A673 (cell line): ENCODE measurements at regions of chr1 and their contacts with region 1.

Region 1: DNA sequence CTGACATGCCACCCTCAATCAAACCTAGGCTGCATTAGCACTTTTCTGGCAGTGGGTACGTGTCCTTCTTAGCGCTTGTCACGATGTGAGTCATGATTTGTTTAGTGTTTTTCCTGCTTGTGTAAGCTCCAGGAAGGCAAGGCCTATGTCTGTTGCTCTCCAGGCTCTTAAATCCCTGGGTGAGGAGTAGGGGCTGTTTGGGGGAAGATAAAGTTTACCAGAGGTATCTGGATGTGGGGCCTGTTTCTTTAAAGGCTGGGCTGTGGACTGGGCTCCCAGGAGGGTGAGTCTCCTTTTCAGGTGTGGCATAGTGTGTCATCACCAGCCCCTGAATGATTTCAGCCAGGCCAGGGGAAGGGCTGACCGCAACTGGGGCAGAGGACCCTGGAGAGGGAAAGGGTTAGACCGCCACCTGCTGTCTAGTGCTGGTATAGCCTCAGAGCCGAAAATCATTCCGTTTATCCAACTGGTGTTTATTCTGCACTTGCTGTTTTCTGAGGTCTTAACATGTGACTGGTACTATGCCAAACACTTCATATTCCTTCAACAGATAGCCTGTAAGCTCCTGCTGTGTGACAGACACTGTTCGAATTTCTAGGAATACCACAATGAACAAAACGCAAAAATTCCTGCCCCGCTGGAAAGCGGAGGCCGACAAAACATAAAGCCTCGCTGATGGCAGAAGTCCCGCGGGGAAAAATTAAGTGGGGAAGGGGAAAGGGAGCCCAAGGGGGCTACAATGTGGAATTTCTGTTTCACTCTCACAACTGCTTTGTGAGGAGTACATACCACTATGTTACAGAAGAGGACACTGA is 9.7 kb downstream of the SERINC2 start:
- DNase-seq: peak; percentile 59
- H3K4me3 ChIP-seq: no peak overlapping the region
- H3K27ac ChIP-seq: no peak overlapping the region
- H3K4me1 ChIP-seq: no peaks in the 10 kb centered on the region
- H3K27me3 ChIP-seq: no peaks in the 10 kb centered on the region
- CTCF ChIP-seq: peak; percentile 94

Region 2: GRCh38 chr1:31182352-31182751 is 240.4 kb before region 1 on chr1:
- CTCF ChIA-PET with region 1: interaction called, 4 read pairs
- POLR2A ChIA-PET with region 1: no interaction called
- intact Hi-C with region 1: loop called (anchors 2 kb)
- DNase-seq: peak; percentile 87
- H3K4me3 ChIP-seq: no peak overlapping the region
- H3K27ac ChIP-seq: no peak overlapping the region
- H3K4me1 ChIP-seq: peaks cover 9% of the 10 kb centered on the region
- H3K27me3 ChIP-seq: peaks cover 4% of the 10 kb centered on the region
- CTCF ChIP-seq: no peak; the same call in 1 of the 2 replicates

Region 3: GRCh38 chr1:31335007-31335406 is 87.7 kb before region 1 on chr1:
- CTCF ChIA-PET with region 1: no interaction called
- POLR2A ChIA-PET with region 1: no interaction called
- intact Hi-C with region 1: no loop called
- DNase-seq: peak; percentile 50
- H3K4me3 ChIP-seq: no peak overlapping the region
- H3K27ac ChIP-seq: no peak overlapping the region
- H3K4me1 ChIP-seq: no peaks in the 10 kb centered on the region
- H3K27me3 ChIP-seq: no peaks in the 10 kb centered on the region
- CTCF ChIP-seq: peak; percentile 57

Region 4: DNA sequence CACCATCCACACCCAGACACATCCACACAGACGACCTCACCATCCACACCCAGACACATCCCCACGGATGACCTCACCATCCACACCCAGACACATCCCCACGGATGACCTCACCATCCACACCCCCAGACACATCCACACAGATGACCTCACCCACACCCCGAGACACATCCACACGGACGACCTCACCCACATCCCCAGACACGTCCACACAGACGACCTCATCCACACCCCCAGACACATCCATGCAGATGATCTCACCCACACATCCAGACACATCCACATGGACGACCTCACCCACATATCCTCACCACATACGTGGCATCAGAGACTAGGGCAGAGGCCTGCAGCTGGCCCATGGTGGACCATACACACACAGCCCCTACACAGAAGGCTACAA is 35.1 kb before region 1 on chr1:
- CTCF ChIA-PET with region 1: interaction called, 3 read pairs
- POLR2A ChIA-PET with region 1: interaction called, 12 read pairs
- intact Hi-C with region 1: no loop called
- DNase-seq: no peak
- H3K4me3 ChIP-seq: no peak overlapping the region
- H3K27ac ChIP-seq: no peak overlapping the region
- H3K4me1 ChIP-seq: no peaks in the 10 kb centered on the region
- H3K27me3 ChIP-seq: no peaks in the 10 kb centered on the region
- CTCF ChIP-seq: no peak

Region 5: DNA sequence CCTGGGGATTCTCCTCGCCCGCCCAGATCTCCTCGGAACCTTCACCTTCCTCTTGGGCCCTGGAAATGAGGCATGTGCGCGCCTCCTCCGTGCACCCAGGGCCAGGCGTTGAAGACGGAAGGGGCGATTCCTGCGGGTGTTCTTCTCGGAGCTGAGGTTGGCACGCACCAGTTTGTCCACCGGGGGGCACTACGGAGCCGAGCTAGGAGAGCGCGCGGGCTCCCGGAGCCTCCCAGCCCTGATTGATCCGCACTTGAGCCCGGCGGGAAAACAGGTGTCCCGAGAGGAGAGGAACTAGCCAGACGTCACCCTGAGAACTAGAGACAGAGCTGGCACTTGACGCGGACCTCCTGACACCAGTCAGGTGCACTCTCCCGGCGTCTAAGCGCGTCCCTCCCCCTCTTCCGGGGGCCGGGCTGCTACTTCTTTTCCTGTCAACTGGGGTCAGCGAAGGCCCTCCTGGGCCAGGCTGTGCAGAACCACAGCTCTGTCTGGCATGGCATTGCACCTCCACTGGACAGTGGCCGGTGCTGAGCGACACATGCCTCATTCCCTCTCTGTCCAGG is 28.0 kb before region 1 on chr1:
- CTCF ChIA-PET with region 1: interaction called, 10 read pairs
- POLR2A ChIA-PET with region 1: interaction called, 4 read pairs
- intact Hi-C with region 1: no loop called
- DNase-seq: peak; percentile 87
- H3K4me3 ChIP-seq: peak overlapping the region; percentile 38
- H3K27ac ChIP-seq: no peak overlapping the region
- H3K4me1 ChIP-seq: peaks cover 3% of the 10 kb centered on the region
- H3K27me3 ChIP-seq: no peaks in the 10 kb centered on the region
- CTCF ChIP-seq: peak; percentile 89

Region 6: DNA sequence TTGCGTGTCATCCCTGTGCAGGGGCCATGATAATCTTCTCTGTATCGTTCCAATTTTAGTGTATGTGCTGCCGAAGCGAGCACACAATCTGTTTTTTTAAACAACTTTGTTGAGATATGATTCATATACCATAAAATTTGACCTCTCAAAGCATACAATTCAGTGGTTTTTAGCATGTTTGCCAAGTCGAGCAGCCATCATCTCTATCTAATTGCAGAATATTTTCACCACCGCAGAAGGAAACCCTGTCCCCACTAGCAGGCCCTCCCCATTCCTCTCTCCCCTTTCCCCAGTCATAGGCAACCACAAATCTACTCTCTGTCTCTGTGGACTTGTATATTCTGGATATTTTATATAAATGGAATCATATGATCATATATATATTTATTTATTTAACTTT is 74.9 kb after region 1 on chr1:
- CTCF ChIA-PET with region 1: no interaction called
- POLR2A ChIA-PET with region 1: no interaction called
- intact Hi-C with region 1: no loop called
- DNase-seq: no peak
- H3K4me3 ChIP-seq: no peak overlapping the region
- H3K27ac ChIP-seq: no peak overlapping the region
- H3K4me1 ChIP-seq: no peaks in the 10 kb centered on the region
- H3K27me3 ChIP-seq: no peaks in the 10 kb centered on the region
- CTCF ChIP-seq: no peak